Naive thymus-derived CD4-positive, alpha-beta T cell (primary cell): ENCODE measurements at regions of chr9 and their contacts with region 1.

Region 1: GRCh38 chr9:100437860-100438805 is 11.2 kb downstream of the MSANTD3 start:
- DNase-seq: peak; percentile 22 to 68 (median 52)
- ATAC-seq: peak; percentile 81
- H3K4me3 ChIP-seq: no peak overlapping the region
- H3K4me3 Mint-ChIP-seq: no peak overlapping the region
- H3K27ac ChIP-seq: no peak overlapping the region
- H3K27ac Mint-ChIP-seq: no peak overlapping the region
- H3K4me1 ChIP-seq: no peaks in the 10 kb centered on the region
- H3K4me1 Mint-ChIP-seq: peaks cover 0 to 13% (median 3%) of the 10 kb centered on the region in 7 donors
- H3K27me3 ChIP-seq: no peaks in the 10 kb centered on the region
- H3K27me3 Mint-ChIP-seq: no peaks in the 10 kb centered on the region

Region 2: DNA sequence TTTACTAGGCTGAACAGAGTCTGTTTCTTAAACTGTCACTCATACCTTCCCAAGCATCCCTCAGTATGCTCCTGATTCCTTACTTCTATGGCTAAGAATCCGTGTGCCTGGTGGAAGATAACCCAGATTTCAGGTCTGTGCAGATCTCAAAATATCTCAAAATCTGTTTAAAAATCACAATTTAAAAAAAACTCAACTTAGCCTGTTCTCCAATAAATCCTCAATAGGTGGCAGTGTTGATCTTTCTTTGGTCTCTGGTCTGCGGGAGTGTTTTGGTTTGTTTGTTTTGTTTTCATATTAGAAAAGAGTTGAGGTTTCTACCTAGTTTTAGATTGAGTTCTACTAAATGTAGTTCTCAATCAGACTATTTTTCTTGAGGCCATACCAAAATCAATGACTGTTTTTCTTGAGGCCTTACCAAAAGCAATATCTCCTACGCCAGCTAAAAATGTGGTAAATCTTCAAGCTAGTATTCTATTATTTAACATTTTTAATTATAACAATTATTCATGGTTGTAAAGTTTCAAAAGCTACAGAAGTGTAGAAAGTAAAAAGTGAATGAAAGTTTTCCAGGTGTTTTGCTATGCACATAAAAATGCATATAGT is 1275.3 kb before region 1 on chr9:
- CTCF ChIA-PET with region 1: no interaction called
- POLR2A ChIA-PET with region 1: no interaction called
- intact Hi-C with region 1: loop called in 1 of 2 experiments (anchors 1 kb)
- DNase-seq: peak in 7 of 9 donors; percentile 22 to 59 (median 47)
- ATAC-seq: peak; percentile 61
- H3K4me3 ChIP-seq: no peak overlapping the region
- H3K4me3 Mint-ChIP-seq: peak overlapping the region in 1 of 10 donors; percentile 0
- H3K27ac ChIP-seq: no peak overlapping the region
- H3K27ac Mint-ChIP-seq: no peak overlapping the region
- H3K4me1 ChIP-seq: peaks cover 0 to 8% of the 10 kb centered on the region in 2 donors
- H3K4me1 Mint-ChIP-seq: peaks cover 9 to 32% (median 17%) of the 10 kb centered on the region in 7 donors
- H3K27me3 ChIP-seq: no peaks in the 10 kb centered on the region
- H3K27me3 Mint-ChIP-seq: peaks cover 7 to 32% (median 10%) of the 10 kb centered on the region in 5 donors

Region 3: DNA sequence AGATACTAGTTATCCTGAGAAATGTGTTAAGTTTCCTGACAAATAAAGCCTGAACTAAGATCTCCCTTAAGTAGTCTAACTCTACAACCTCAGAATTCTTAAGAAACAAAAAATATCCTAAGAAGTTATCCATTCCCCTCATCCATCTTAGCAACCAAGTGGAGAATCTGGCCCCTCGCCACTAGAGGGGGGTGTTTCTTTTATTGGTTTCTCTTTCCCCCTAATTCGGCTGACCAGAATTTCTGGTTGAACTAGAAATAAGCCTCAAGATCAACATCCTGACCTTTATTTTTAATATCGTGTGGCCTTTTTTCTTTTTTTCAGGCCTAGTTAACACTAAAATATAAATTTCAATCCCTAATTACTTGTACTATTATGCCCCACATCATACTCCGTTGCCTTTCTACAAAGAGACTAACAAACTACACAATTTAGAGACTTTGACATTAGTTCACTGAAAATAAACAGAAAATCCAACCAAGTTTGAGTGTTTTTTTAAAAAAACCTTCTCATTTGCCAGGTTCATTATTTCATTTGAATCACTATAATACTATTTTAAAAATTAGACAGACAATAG is 630.8 kb before region 1 on chr9:
- CTCF ChIA-PET with region 1: no interaction called
- POLR2A ChIA-PET with region 1: no interaction called
- intact Hi-C with region 1: loop called in 1 of 2 experiments (anchors 5 kb)
- DNase-seq: peak in 8 of 9 donors; percentile 31 to 76 (median 68)
- ATAC-seq: peak; percentile 89
- H3K4me3 ChIP-seq: no peak overlapping the region
- H3K4me3 Mint-ChIP-seq: no peak overlapping the region
- H3K27ac ChIP-seq: no peak overlapping the region
- H3K27ac Mint-ChIP-seq: peak overlapping the region in 4 of 9 donors; percentile 1 to 63 (median 12)
- H3K4me1 ChIP-seq: peaks cover 0 to 5% of the 10 kb centered on the region in 2 donors
- H3K4me1 Mint-ChIP-seq: peaks cover 0 to 23% (median 4%) of the 10 kb centered on the region in 7 donors
- H3K27me3 ChIP-seq: no peaks in the 10 kb centered on the region
- H3K27me3 Mint-ChIP-seq: peaks cover 0 to 12% (median 0%) of the 10 kb centered on the region in 5 donors

Region 4: DNA sequence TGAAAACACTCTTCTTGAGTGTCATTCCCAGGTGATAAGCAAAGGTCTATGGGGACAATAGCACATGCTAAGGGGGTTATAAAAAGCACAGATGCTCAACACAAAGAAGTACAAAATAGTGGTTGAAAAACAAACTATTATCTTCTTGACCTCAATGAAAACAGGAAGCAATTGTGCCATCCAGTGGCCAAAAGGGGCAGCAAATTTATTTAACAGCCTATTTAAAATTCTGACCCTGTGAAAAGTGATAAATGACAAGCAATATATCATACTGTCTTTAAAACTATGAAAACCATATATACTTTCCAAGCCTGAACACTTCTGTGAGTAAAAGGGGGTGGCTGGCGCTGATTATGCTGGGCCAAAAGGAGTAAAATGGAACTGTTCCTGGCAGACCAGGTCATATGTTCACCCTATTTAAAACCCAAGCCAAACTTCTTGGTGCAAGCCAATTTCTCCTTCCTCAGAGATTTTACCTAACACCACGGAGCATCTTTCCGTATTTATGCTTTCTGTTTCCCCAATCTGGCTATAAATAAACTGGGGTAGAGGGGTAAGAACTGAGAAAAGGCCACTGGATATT is 115.1 kb before region 1 on chr9:
- CTCF ChIA-PET with region 1: interaction called, 5 read pairs
- POLR2A ChIA-PET with region 1: no interaction called
- intact Hi-C with region 1: loop called in 1 of 2 experiments (anchors 2 kb)
- DNase-seq: no peak
- ATAC-seq: no peak
- H3K4me3 ChIP-seq: no peak overlapping the region
- H3K4me3 Mint-ChIP-seq: no peak overlapping the region
- H3K27ac ChIP-seq: no peak overlapping the region
- H3K27ac Mint-ChIP-seq: peak overlapping the region in 2 of 9 donors; percentile 14 to 57
- H3K4me1 ChIP-seq: no peaks in the 10 kb centered on the region
- H3K4me1 Mint-ChIP-seq: peaks cover 0 to 27% (median 16%) of the 10 kb centered on the region in 7 donors
- H3K27me3 ChIP-seq: no peaks in the 10 kb centered on the region
- H3K27me3 Mint-ChIP-seq: no peaks in the 10 kb centered on the region

Region 5: DNA sequence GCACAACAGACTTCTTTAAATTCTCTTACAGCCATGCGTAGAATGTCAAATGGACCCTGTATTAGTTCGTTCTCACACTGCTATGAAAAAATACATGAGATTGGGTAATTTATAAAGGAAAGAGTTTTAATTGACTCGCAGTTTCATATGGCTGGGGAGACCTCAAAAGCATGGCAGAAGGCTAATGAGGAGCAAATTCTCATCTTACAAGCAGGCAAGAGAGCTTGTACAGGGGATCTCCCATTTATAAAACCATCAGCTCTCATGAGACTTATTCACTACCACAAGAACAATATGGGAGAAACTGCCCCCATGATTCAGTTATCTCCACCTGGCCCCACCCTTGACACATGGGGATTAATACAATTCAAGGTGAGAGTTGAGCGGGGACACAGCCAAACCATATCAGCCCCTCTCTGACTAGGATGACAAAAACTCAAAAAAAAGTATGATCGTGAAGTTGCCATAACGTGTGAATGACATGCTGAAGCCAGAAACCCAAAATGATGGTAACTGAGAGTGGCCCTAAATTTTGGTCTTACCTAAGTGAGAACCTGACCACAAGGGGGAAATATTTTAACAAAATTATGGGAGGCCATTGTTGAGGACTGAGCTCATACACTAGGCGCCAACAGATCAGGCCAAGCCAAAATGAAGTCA is 67.9 kb before region 1 on chr9:
- CTCF ChIA-PET with region 1: interaction called, 3 read pairs
- POLR2A ChIA-PET with region 1: no interaction called
- intact Hi-C with region 1: loop called in 1 of 2 experiments (anchors 1 kb)
- DNase-seq: no peak
- ATAC-seq: no peak
- H3K4me3 ChIP-seq: no peak overlapping the region
- H3K4me3 Mint-ChIP-seq: no peak overlapping the region
- H3K27ac ChIP-seq: no peak overlapping the region
- H3K27ac Mint-ChIP-seq: no peak overlapping the region
- H3K4me1 ChIP-seq: no peaks in the 10 kb centered on the region
- H3K4me1 Mint-ChIP-seq: no peaks in the 10 kb centered on the region
- H3K27me3 ChIP-seq: no peaks in the 10 kb centered on the region
- H3K27me3 Mint-ChIP-seq: peaks cover 0 to 3% (median 0%) of the 10 kb centered on the region in 5 donors